CD14-positive monocyte (primary cell): ENCODE measurements at regions of chr1 and their contacts with region 1.

Region 1: DNA sequence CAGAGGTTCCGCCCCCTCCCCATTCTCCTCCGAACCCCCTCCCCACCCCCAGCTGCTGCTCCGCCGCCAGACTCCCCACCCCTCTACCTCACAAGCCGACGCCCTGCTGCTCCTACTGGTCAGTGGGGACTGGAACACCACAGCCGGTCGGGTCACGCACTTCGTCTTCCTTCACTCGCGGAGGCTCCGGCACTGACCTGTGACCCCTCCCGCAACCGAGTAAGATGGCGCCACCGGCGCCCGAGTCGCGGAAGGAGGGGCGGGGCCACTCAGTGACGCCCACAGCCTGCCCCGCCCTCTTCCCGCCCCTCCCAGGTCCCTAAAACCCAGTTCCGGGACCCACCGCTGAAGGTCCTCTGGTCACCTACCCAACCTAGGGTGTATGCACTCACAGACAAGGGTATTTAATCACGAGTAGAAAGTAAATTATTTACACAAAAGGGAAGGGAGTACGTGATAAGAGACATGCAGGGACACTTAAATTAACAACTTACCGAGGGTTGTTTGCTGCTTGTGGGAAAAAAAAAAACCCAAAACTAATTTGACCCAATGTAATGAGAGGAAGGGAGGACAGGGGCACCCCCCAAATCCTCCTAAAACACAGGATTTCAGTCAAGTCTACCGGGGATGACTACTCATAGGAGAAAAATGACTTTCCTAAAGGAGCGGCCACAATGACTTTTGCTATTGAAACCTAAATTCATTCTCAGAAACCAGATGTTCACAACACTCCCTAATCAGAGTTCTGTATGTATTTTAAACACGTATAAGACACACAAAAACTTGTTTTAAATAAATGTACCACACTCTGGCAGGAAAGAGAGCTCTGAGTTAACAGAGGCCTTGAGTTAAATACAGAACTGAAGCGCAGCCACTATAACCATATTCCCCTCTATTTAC is at the start of gene RIT1:
- DNase-seq: peak; percentile 91 to 93 (median 93)
- H3K4me3 ChIP-seq: peak within 1 kb of the TSS; percentile 89 to 99 (median 95)
- H3K4me3 Mint-ChIP-seq: peak within 1 kb of the TSS; percentile 94 to 96
- H3K27ac ChIP-seq: peak within 1 kb of the TSS; percentile 95 to 96
- H3K27ac Mint-ChIP-seq: peak within 1 kb of the TSS; percentile 95 to 99 (median 98)
- H3K4me1 ChIP-seq: peaks cover 24 to 27% of the 10 kb centered on the region in 2 donors
- H3K4me1 Mint-ChIP-seq: peaks cover 21% of the 10 kb centered on the region
- H3K27me3 ChIP-seq: no peaks in the 10 kb centered on the region
- H3K27me3 Mint-ChIP-seq: no peaks in the 10 kb centered on the region
- CTCF ChIP-seq: no peak
- polyA plus RNA-seq, gene RIT1: 57.2 to 76.8 (median 69.6) TPM

Region 2: DNA sequence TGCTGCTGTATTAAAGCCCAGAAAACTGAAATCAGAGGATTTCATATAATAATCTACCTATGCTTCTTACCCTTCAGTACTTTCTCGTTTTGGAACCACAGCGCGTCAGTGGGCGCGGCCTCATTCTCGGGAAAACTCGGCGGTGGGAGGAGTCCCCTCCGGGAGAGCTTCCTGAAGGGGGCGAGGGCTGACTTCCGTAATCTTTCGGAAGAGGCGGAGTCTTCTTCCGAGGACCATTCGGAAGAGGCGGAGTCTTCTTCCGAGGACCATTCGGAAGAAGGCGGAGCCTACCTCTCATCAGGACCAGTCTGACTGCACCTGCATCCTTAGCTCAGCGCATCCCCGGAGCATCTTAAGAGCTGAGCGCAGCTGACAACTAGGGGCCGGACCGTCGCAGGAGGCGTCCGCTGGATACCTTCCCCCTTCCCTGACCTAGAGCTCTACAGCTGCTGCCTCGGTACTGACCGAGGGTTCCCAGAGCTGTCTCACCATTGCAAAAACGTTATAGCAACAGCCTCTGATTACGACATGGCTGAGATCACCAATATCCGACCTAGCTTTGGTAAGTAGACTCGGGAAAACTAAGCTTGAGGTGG is 52.1 kb before region 1 on chr1 and contains the start of gene SYT11:
- intact Hi-C with region 1: loop called in 1 of 2 experiments (anchors 2 kb)
- DNase-seq: peak; percentile 91 to 95 (median 95)
- H3K4me3 ChIP-seq: peak within 1 kb of the TSS; percentile 44 to 84 (median 78)
- H3K4me3 Mint-ChIP-seq: peak within 1 kb of the TSS; percentile 80 to 87
- H3K27ac ChIP-seq: peak within 1 kb of the TSS; percentile 83 to 88
- H3K27ac Mint-ChIP-seq: peak within 1 kb of the TSS; percentile 95 to 99 (median 96)
- H3K4me1 ChIP-seq: peaks cover 45 to 58% of the 10 kb centered on the region in 2 donors
- H3K4me1 Mint-ChIP-seq: peaks cover 38% of the 10 kb centered on the region
- H3K27me3 ChIP-seq: no peaks in the 10 kb centered on the region
- H3K27me3 Mint-ChIP-seq: peaks cover 0 to 1% (median 0%) of the 10 kb centered on the region in 3 donors
- CTCF ChIP-seq: no peak
- polyA plus RNA-seq, gene SYT11: 5.1 to 11.0 (median 9.6) TPM

Region 3: DNA sequence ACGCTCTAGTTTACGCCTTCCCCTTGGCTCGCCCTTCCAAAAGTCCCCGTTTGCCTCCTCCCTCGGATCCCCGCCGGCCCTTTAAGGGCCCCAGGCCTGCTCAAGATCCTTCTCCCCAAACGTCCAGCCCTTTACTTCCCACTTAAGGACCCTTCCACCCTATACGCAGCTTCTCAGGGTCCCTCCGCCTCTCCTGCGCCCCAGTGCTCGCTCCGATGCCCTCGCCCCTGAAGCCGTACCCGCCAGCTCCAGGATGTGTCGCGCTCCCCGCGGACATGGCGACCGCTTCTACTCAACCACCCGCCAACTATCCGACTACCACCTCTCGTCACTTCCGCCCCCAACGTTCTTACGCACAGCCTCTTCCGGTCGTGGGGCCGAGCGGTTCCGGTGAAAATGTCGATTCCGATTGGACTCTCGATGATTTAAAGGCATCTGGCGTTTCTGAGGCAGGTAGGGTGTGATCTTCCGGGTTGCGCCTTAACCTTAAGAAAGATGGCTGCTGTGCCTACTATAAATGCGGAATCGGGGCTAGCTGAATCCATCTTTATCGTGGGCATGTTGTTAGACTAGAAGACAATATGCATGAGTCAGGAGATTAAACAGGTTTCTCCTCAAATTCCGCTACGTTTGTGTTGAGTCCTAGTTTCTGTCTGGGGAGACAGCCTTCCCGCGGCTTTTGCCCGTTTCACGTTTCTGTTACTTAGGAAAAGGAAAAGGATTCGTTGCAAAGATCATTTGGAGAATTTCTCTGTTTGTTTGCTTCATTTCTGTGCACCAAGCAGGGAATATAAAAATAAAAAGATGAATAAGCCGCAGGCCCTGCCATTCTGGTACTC is 22.9 kb after region 1 on chr1 and contains the start of gene KHDC4:
- intact Hi-C with region 1: loop called in 1 of 2 experiments (anchors 1 kb)
- DNase-seq: peak; percentile 98 to 99 (median 99)
- H3K4me3 ChIP-seq: peak within 1 kb of the TSS; percentile 63 to 96 (median 94)
- H3K4me3 Mint-ChIP-seq: no peak within 1 kb of the TSS
- H3K27ac ChIP-seq: peak within 1 kb of the TSS; percentile 88 to 94
- H3K27ac Mint-ChIP-seq: peak within 1 kb of the TSS in 1 of 7 donors; percentile 87
- H3K4me1 ChIP-seq: peaks cover 22 to 44% of the 10 kb centered on the region in 2 donors
- H3K4me1 Mint-ChIP-seq: peaks cover 25% of the 10 kb centered on the region
- H3K27me3 ChIP-seq: no peaks in the 10 kb centered on the region
- H3K27me3 Mint-ChIP-seq: peaks cover 0 to 2% (median 0%) of the 10 kb centered on the region in 3 donors
- CTCF ChIP-seq: peak; percentile 28
- polyA plus RNA-seq, gene KHDC4: 3.4 to 22.0 (median 3.5) TPM